Aorta (tissue), 5 donors: ENCODE measurements at regions of chr20 and their contacts with region 1.

Region 1: DNA sequence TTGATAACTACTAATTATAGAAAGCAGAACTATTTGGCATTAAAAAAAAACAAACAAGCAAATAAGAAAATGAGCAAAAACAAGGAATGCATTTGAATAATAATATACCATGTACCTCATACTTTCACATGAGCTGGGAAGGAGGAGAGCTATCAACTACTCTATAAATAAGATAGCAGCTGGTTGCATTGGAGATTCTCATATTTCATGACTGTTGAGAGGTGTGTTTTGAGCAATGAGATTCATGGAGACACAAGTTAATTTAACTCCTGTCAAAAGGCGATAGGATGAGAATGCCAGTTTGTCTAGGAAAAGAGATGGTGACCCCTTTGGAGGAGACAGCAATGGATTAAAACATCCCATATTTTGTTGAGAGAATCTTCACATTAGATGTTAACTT is 348.8 kb upstream of the SPTLC3 start:
- DNase-seq: no peak
- ATAC-seq: no peak
- H3K4me3 ChIP-seq: no peak overlapping the region
- H3K27ac ChIP-seq: no peak overlapping the region
- H3K4me1 ChIP-seq: no peaks in the 10 kb centered on the region
- H3K27me3 ChIP-seq: no peaks in the 10 kb centered on the region

Region 2: DNA sequence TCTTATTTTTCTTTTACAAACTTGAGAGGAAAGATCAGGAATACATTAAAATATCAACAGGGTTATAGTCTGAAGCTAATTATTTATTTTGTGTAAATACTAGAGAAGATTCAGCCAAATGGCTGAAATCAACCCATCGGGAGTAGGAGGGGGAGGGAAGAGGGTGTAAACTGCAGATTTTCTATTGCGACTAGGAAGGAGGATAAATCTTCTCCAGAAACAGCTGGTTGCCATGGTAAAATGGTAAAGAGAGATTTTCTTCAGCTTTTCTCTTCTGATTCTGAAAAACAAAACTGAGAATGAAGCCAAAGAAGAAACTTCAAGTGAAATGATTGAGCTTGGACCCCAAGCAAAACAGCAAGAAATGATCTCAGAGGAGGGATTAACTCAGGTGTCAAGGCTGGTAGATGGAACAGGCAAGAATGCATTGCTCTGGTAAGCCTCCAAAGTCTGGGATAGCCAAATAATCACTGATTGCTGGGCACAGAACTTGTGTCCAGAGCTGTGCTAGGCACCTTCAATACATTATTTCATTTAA is 155.4 kb after region 1 on chr20:
- intact Hi-C with region 1: loop called in 1 of 2 experiments (anchors 10 kb)
- DNase-seq: no peak
- ATAC-seq: no peak
- H3K4me3 ChIP-seq: no peak overlapping the region
- H3K27ac ChIP-seq: no peak overlapping the region
- H3K4me1 ChIP-seq: no peaks in the 10 kb centered on the region
- H3K27me3 ChIP-seq: no peaks in the 10 kb centered on the region